HCT116 (cell line): ENCODE measurements at regions of chr19 and their contacts with region 1.

Region 1: GRCh38 chr19:35140962-35141637 is 2.0 kb upstream of the FXYD7 start:
- DNase-seq: peak; percentile 83
- ATAC-seq: peak; percentile 85
- H3K4me3 ChIP-seq: peak overlapping the region; percentile 49 to 66
- H3K27ac ChIP-seq: peak overlapping the region; percentile 32; the same call in 1 of the 2 replicates
- H3K4me1 ChIP-seq: peaks cover 22 to 35% of the 10 kb centered on the region in 2 experiments
- H3K27me3 ChIP-seq: no peaks in the 10 kb centered on the region
- CTCF ChIP-seq: peak; percentile 44 to 47 (median 46); a peak in 4 of 6 replicates
- POLR2A ChIP-seq: no peak
- RAD21 ChIP-seq: peak; percentile 72

Region 2: GRCh38 chr19:35044317-35045117 is 96.6 kb before region 1 on chr19:
- CTCF ChIA-PET with region 1: interaction called, 23 read pairs
- POLR2A ChIA-PET with region 1: no interaction called
- RAD21 ChIA-PET with region 1: interaction called in 1 of 2 experiments, 5 read pairs
- intact Hi-C with region 1: no loop called
- DNase-seq: no peak
- ATAC-seq: peak; percentile 47
- H3K4me3 ChIP-seq: no peak overlapping the region
- H3K27ac ChIP-seq: no peak overlapping the region
- H3K4me1 ChIP-seq: no peaks in the 10 kb centered on the region
- H3K27me3 ChIP-seq: no peaks in the 10 kb centered on the region
- CTCF ChIP-seq: peak; percentile 65 to 98 (median 94)
- POLR2A ChIP-seq: no peak
- RAD21 ChIP-seq: peak; percentile 71

Region 3: GRCh38 chr19:35055715-35056179 is 85.4 kb before region 1 on chr19:
- CTCF ChIA-PET with region 1: interaction called, 19 read pairs
- POLR2A ChIA-PET with region 1: interaction called, 3 read pairs
- RAD21 ChIA-PET with region 1: no interaction called
- intact Hi-C with region 1: no loop called
- DNase-seq: no peak
- ATAC-seq: peak; percentile 99
- H3K4me3 ChIP-seq: no peak overlapping the region
- H3K27ac ChIP-seq: no peak overlapping the region
- H3K4me1 ChIP-seq: peaks cover 0 to 8% of the 10 kb centered on the region in 2 experiments; a peak in 2 of 4 replicates
- H3K27me3 ChIP-seq: no peaks in the 10 kb centered on the region
- CTCF ChIP-seq: peak; percentile 69 to 88 (median 71)
- POLR2A ChIP-seq: no peak
- RAD21 ChIP-seq: peak; percentile 70

Region 4: GRCh38 chr19:35124098-35125060 is 16.7 kb before region 1 on chr19:
- CTCF ChIA-PET with region 1: interaction called, 12 read pairs
- POLR2A ChIA-PET with region 1: interaction called, 3 read pairs
- RAD21 ChIA-PET with region 1: no interaction called
- intact Hi-C with region 1: no loop called
- DNase-seq: peak; percentile 70
- ATAC-seq: peak; percentile 96
- H3K4me3 ChIP-seq: peak overlapping the region; percentile 41 to 54
- H3K27ac ChIP-seq: peak overlapping the region; percentile 30; the same call in 1 of the 2 replicates
- H3K4me1 ChIP-seq: peaks cover 21 to 47% of the 10 kb centered on the region in 2 experiments
- H3K27me3 ChIP-seq: no peaks in the 10 kb centered on the region
- CTCF ChIP-seq: no peak
- POLR2A ChIP-seq: peak; percentile 57
- RAD21 ChIP-seq: no peak

Region 5: GRCh38 chr19:35357867-35358573 is 216.9 kb after region 1 on chr19 and contains the start of gene FFAR3:
- CTCF ChIA-PET with region 1: no interaction called
- POLR2A ChIA-PET with region 1: no interaction called
- RAD21 ChIA-PET with region 1: no interaction called
- intact Hi-C with region 1: no loop called
- DNase-seq: no peak
- ATAC-seq: no peak
- H3K4me3 ChIP-seq: no peak within 1 kb of the TSS
- H3K27ac ChIP-seq: no peak within 1 kb of the TSS
- H3K4me1 ChIP-seq: peaks cover 0 to under 1% of the 10 kb centered on the region in 2 experiments; a peak in 1 of 4 replicates
- H3K27me3 ChIP-seq: peaks cover 4% of the 10 kb centered on the region; the same call in 1 of the 2 replicates
- CTCF ChIP-seq: no peak
- POLR2A ChIP-seq: no peak
- RAD21 ChIP-seq: no peak
- total RNA-seq, gene FFAR3: not detected